Left lung (tissue), 14 donors: ENCODE measurements at regions of chr10 and their contacts with region 1.

Region 1: DNA sequence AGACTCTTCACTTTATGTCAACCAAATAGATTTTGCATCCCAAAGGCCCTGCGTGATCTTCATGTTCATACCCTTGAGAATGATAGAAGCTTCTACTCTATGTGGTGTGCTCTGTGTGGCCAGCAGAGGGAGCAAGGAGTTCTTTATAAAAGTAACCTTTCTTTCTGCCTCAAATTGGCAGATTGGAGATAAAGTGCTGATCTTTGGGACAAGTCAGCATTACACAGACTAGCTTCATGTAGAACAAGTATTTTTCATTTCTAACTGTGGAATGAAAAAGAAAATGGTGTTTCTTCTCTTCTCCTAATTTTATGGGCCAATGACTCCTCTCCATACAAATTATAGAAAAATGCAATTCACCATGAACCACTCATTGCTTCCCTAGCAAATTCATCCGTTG is 1214.1 kb downstream of the SORCS1 start:
- DNase-seq: peak in 2 of 4 donors; percentile 54 to 73
- ATAC-seq: peak; percentile 70
- H3K4me3 ChIP-seq: no peak overlapping the region
- H3K27ac ChIP-seq: no peak overlapping the region
- H3K4me1 ChIP-seq: no peaks in the 10 kb centered on the region
- H3K27me3 ChIP-seq: no peaks in the 10 kb centered on the region
- CTCF ChIP-seq: peak; percentile 57 to 66

Region 2: GRCh38 chr10:105597312-105597711 is 353.1 kb before region 1 on chr10:
- intact Hi-C with region 1: no loop called
- DNase-seq: no peak
- ATAC-seq: no peak
- H3K4me3 ChIP-seq: no peak overlapping the region
- H3K27ac ChIP-seq: no peak overlapping the region
- H3K4me1 ChIP-seq: no peaks in the 10 kb centered on the region
- H3K27me3 ChIP-seq: no peaks in the 10 kb centered on the region
- CTCF ChIP-seq: no peak

Region 3: GRCh38 chr10:106175760-106176377 is 225.5 kb after region 1 on chr10:
- intact Hi-C with region 1: loop called in 1 of 2 experiments (anchors 10 kb)
- DNase-seq: peak in 1 of 4 donors; percentile 32
- ATAC-seq: peak; percentile 44
- H3K4me3 ChIP-seq: no peak overlapping the region
- H3K27ac ChIP-seq: no peak overlapping the region
- H3K4me1 ChIP-seq: no peaks in the 10 kb centered on the region
- H3K27me3 ChIP-seq: no peaks in the 10 kb centered on the region
- CTCF ChIP-seq: peak in 1 of 2 donors; percentile 64

Region 4: GRCh38 chr10:106296750-106297392 is 346.5 kb after region 1 on chr10:
- intact Hi-C with region 1: no loop called
- DNase-seq: no peak
- ATAC-seq: no peak
- H3K4me3 ChIP-seq: no peak overlapping the region
- H3K27ac ChIP-seq: no peak overlapping the region
- H3K4me1 ChIP-seq: no peaks in the 10 kb centered on the region
- H3K27me3 ChIP-seq: no peaks in the 10 kb centered on the region
- CTCF ChIP-seq: no peak